ENCODE measurements at regions of chr20 and their contacts with region 1.

Region 1: DNA sequence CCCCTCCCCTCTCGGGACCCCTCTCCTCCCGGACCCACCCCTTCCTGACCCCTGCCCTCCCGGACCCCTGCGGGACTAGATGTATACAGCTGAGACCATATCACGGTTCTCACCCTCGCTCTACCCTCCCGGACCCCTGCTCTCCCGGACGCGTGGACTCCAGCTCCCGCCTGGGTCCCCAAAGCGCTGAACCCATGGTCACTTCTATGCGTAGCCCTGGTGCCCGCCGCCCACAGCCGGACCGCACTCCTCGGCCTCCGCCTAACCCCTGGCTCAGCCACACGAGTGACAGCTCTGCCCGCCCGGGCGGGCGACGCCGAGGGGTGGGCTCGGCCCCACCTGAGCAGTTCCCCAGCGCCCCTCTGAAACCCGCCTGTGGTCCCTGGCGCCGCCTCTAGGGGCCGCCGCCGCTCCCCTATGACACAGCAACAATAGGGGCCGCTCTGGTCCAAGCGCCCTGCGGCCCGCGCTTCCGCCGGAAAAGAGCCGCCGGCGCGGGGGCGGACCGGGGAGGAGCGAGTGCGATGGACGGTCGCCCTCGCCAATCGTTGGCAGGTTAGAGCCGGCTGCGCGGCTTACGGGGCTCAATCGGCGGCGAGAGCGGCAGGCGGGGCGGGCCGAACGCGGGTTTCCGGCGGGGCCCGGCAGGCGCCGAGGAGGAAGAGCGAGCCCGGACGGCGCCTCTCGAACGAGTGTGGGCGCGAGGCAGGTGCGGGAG is at the start of gene ADRM1:
- DNase-seq: peak; percentile 95 to 98 (median 97)
- ATAC-seq: peak; percentile 91
- H3K4me3 ChIP-seq: peak within 1 kb of the TSS; percentile 93 to 96
- H3K27ac ChIP-seq: peak within 1 kb of the TSS; percentile 96 to 98
- H3K4me1 ChIP-seq: peaks cover 16 to 33% of the 10 kb centered on the region in 2 donors
- H3K27me3 ChIP-seq: no peaks in the 10 kb centered on the region
- CTCF ChIP-seq: peak; percentile 95 to 96
- polyA plus RNA-seq, gene ADRM1: 30.0 to 54.5 (median 41.0) TPM

Region 2: DNA sequence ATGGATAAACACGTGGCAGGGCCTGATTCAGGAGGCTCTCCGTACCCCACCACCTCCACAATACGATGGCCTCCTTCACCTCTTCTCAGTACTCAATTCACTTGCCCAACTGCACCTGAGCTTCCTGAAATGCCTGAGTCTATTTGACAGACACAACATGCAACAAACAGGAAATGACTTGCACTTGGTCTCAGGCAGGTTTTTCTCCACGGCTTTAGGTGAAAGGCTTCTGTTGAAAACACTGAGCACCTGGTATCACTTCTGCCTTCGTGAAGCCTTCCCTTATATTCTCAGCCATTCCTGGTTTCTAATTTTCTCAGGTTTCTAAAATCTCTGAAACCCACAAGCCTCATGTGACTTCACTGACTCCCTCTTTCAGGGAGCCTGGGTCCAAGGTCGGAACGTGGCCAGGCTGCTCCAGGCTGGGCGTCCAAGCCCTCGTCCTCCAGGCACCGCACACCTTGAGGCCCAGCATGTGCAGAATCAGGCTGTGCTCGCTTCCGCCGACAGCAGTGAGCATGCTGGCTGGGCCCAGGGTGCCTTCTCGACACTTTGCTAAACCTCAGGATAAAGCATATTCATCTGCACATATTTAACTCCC is 271.6 kb before region 1 on chr20:
- intact Hi-C with region 1: no loop called
- DNase-seq: peak in 1 of 4 donors; percentile 54
- ATAC-seq: no peak
- H3K4me3 ChIP-seq: no peak overlapping the region
- H3K27ac ChIP-seq: peak overlapping the region in 1 of 2 donors; percentile 53
- H3K4me1 ChIP-seq: peaks cover 6 to 14% of the 10 kb centered on the region in 2 donors
- H3K27me3 ChIP-seq: no peaks in the 10 kb centered on the region
- CTCF ChIP-seq: no peak

Region 3: DNA sequence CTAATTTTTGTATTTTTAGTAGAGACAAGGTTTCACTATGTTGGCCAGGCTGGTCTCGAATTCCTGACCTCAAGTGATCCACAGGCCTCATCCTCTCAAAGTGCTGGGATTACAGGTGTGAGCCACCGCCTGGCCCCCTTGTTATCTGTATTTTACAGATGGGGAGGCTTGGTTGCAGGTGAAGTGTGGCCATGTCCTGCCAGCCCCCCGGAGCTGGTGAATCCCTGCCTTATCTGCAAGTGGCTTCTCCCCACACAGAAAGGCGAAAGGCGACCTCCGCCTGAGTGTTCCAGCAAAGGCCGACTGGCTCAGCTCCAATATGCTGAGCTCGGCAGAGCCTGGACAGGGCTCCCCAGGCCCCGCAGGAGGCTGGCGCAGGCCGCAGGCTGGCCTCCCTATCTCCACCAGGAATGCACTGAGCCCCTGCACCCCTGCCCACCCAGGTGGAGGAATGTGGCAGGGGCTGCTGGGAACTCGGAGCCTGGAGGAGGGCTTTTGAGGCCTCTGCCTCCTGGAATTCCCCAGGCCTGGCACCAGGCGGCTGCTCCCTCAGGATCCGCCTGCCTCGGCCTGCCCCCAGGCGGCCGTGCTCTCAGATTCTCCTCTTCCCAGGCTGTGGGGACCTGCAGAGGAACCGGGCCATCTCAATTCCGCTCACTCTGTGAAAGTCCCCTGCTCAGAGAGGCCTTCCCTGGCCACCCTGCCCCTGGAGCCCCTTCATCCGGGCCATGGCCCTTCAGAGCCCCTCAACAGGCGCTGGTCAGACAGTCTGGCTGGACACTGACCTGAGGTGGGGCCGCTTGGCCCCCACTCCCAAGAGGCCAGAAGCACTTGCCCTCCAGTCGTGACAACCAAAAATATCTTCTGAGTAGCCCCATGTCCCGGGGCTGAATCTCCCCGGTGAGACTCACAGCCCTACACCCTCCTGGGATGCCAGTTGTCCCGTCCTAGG is 73.9 kb after region 1 on chr20:
- intact Hi-C with region 1: loop called (anchors 5 to 10 kb)
- DNase-seq: peak in 1 of 4 donors; percentile 80
- ATAC-seq: peak; percentile 82
- H3K4me3 ChIP-seq: no peak overlapping the region
- H3K27ac ChIP-seq: peak overlapping the region; percentile 5 to 59
- H3K4me1 ChIP-seq: peaks cover 31 to 45% of the 10 kb centered on the region in 2 donors
- H3K27me3 ChIP-seq: no peaks in the 10 kb centered on the region
- CTCF ChIP-seq: peak; percentile 37 to 52

Region 4: DNA sequence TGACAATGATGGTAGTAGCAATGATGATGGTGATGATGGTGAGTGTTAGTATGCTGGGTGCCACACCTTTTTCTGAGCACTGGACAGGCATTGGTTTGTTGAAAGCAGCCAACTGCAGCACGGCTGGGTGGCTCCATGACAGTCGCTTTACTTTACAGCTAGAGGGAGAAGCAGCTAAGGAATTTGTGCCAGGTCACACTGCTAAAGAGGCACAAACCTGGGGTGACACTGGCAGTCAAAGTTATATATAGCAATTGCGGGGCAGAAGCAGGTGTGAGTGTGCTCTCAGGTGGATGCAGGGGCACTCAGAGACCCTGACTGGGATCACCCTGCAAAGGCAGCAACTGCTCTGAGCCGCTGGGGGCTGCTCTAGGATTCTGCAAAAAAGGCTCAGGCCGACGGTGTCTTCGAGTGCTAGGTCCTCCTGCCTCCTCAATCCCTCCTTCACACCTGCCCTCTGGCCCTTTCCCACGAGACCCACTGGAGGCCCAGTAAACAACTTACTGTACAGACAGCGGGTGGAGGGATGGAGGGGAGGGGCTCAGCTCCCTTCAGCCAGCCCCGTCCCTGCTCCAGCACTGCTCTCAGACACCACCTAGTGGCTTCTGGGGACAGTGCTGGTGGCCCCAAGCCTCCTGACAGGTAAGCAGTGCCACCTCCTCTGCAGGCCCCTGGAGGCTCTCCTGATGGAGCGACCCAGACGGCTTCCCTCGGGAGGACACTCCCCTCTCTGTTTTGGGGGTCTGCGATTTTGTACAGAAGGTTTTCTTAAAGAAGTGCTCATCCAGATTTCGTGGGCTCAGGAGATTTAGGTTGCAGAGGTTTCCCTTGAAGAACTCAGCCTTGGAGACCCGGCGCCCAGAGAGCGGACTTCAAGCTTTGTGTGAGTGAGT is 80.1 kb after region 1 on chr20:
- intact Hi-C with region 1: loop called (anchors 5 to 10 kb)
- DNase-seq: peak in 2 of 4 donors; percentile 83 to 89
- ATAC-seq: peak; percentile 82
- H3K4me3 ChIP-seq: no peak overlapping the region
- H3K27ac ChIP-seq: no peak overlapping the region
- H3K4me1 ChIP-seq: peaks cover 10 to 42% of the 10 kb centered on the region in 2 donors
- H3K27me3 ChIP-seq: no peaks in the 10 kb centered on the region
- CTCF ChIP-seq: peak; percentile 87 to 92

Measured in left lung (tissue), 14 donors.